Activated naive CD4-positive, alpha-beta T cell treated with anti-CD3 and anti-CD28 coated beads for 36 hours (primary cell): ENCODE measurements at regions of chrX and their contacts with region 1.

Region 1: GRCh38 chrX:130401415-130402207 is at the start of gene RBMX2:
- DNase-seq: peak; percentile 63
- H3K4me3 Mint-ChIP-seq: peak within 1 kb of the TSS; percentile 83
- H3K27ac Mint-ChIP-seq: peak within 1 kb of the TSS; percentile 90
- H3K4me1 Mint-ChIP-seq: peaks cover 20% of the 10 kb centered on the region
- H3K27me3 Mint-ChIP-seq: no peaks in the 10 kb centered on the region
- total RNA-seq, gene RBMX2: 32.3 to 33.6 TPM

Region 2: GRCh38 chrX:130091958-130092522 is 309.6 kb before region 1 on chrX:
- CTCF ChIA-PET with region 1: no interaction called
- intact Hi-C with region 1: no loop called
- DNase-seq: peak; percentile 94
- H3K4me3 Mint-ChIP-seq: peak overlapping the region; percentile 80
- H3K27ac Mint-ChIP-seq: peak overlapping the region; percentile 96
- H3K4me1 Mint-ChIP-seq: peaks cover 58% of the 10 kb centered on the region
- H3K27me3 Mint-ChIP-seq: no peaks in the 10 kb centered on the region

Region 3: DNA sequence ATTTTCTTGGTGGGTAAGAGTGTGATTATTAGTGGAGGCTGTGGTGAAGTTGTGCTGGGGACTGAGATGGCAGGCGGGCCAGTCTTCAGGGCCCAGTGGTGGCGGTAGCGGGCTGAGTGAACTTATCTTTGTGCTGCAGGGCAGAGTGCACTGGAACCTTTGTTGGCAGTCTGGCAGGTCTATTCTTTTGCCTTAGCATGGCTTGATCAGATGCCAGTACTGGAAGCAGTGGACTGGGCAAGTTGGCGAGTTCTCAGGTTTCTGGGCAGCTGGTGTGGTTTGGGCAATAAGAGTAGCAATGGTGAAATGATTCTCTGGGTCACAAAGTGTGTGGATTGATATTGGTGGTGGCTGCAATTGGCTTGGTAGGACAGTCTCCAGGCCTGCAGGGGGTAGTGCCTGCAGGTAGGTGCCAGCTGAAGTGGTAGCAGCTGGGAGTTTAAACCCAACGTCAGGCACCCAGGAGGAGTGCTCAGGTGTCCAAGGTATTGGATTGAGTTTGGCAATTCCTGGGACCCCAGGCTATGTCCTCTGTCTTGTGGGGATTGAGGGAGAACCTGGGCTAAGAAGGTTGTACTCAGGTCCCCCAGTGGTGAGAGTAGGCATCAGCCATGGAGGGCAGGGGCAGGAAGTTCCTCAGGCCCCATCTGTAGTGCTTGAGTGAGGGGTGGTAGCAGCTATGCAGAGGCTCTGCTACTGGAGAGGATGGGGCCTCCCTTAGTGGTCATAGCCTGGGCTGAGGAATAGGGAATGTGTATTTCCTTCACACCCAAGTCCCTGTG is 96.8 kb before region 1 on chrX:
- CTCF ChIA-PET with region 1: no interaction called
- intact Hi-C with region 1: no loop called
- DNase-seq: no peak
- H3K4me3 Mint-ChIP-seq: no peak overlapping the region
- H3K27ac Mint-ChIP-seq: no peak overlapping the region
- H3K4me1 Mint-ChIP-seq: no peaks in the 10 kb centered on the region
- H3K27me3 Mint-ChIP-seq: no peaks in the 10 kb centered on the region

Region 4: DNA sequence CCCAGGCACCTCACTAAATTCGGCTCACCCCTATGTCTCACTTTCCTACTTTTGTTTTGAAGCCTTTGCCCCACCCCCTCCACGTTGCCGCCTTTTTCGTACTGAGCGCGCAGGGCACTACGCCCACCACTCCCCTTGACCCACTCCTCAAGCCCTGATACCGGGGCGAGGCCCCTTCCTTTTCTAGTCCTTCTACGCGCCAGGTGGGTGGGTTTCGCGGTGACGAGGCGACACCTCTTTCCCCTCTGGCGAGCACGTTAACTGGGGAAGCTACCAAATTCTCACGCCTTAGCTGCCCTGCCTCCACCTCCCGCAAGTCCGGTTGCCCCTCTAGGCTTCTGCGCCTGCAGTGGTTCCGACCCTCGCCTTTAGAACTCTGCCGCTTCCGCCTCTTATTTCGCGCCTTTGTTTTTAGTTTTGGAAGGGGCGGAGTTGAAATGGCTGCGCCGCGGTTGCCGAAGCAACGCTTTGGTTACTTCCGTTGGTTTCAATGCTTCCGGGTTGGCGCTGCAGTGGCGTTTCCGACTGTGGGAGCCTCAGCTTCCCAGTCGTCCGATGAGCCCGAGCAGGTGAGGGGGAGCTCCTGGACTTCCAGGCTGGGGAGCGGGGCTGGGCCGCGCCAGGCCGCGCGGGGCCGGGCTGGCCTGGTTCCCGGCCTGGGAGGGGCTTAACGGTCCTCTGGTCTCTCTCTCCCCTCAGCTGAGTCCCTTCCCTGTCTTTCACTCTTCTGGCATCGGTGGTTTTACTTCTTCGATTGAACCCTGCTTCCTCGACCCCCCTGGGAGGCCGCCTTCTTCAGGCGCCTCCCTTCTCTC is 62.0 kb before region 1 on chrX and contains the start of gene SLC25A14:
- CTCF ChIA-PET with region 1: no interaction called
- intact Hi-C with region 1: loop called (anchors 1 kb)
- DNase-seq: peak; percentile 82
- H3K4me3 Mint-ChIP-seq: peak within 1 kb of the TSS; percentile 86
- H3K27ac Mint-ChIP-seq: peak within 1 kb of the TSS; percentile 89
- H3K4me1 Mint-ChIP-seq: peaks cover 13% of the 10 kb centered on the region
- H3K27me3 Mint-ChIP-seq: no peaks in the 10 kb centered on the region
- total RNA-seq, gene SLC25A14: 7.4 to 9.0 TPM

Region 5: DNA sequence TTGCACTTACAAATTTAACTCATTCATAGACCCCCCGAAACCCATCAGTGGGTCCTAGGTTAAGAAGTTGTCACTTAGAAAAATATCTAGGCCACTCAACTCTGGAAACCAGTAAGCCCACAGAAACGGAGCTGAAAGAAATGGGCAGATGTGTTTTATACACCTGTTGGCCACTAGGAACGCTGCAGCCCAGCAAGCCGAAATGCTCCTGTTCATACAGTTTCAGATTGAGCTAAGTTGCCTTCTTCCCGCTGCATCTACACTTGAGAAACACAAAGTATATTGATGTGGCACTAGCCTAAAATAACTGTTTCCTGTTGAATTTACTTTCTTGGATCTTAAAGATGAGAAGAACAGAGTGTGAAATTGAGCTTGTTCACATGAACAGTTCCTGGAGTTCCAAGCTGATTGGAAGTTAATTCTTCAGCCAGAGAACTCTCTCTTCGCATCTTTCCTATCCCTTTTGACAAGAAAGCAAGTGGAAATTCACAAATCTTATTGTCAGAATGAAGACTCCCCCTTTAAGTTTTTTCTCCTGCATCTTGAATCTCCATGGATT is 174.3 kb after region 1 on chrX:
- CTCF ChIA-PET with region 1: no interaction called
- intact Hi-C with region 1: no loop called
- DNase-seq: peak; percentile 49
- H3K4me3 Mint-ChIP-seq: no peak overlapping the region
- H3K27ac Mint-ChIP-seq: no peak overlapping the region
- H3K4me1 Mint-ChIP-seq: no peaks in the 10 kb centered on the region
- H3K27me3 Mint-ChIP-seq: no peaks in the 10 kb centered on the region